HCT116 (cell line): ENCODE measurements at regions of chr18 and their contacts with region 1.

Region 1: DNA sequence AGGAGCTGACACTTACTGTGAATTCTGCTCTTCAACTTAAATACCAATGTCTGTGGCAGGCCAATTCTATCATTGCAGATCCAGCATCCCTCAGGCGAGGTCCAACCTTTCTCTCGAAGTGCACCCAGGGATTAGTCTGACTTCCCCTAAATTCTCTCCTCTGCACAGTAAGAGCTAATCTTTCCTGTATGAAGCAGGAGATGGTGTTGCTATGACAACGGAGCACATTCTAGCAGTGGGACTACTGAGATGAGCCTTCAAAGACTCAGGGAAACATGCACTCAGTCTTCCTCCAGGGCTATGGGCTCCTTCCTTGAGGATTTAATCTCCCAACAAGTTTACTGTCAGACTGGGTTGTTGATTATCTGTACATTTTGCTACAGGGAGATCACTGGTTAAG is 176.3 kb downstream of the NOL4 start:
- DNase-seq: no peak
- ATAC-seq: no peak
- H3K4me3 ChIP-seq: no peak overlapping the region
- H3K27ac ChIP-seq: no peak overlapping the region
- H3K4me1 ChIP-seq: no peaks in the 10 kb centered on the region
- H3K27me3 ChIP-seq: no peaks in the 10 kb centered on the region
- CTCF ChIP-seq: no peak
- POLR2A ChIP-seq: no peak
- RAD21 ChIP-seq: no peak

Region 2: GRCh38 chr18:33914399-33914798 is 134.0 kb before region 1 on chr18:
- CTCF ChIA-PET with region 1: no interaction called
- POLR2A ChIA-PET with region 1: no interaction called
- RAD21 ChIA-PET with region 1: no interaction called
- intact Hi-C with region 1: no loop called
- DNase-seq: no peak
- ATAC-seq: no peak
- H3K4me3 ChIP-seq: no peak overlapping the region
- H3K27ac ChIP-seq: no peak overlapping the region
- H3K4me1 ChIP-seq: no peaks in the 10 kb centered on the region
- H3K27me3 ChIP-seq: no peaks in the 10 kb centered on the region
- CTCF ChIP-seq: no peak
- POLR2A ChIP-seq: no peak
- RAD21 ChIP-seq: no peak

Region 3: GRCh38 chr18:33987206-33987605 is 61.2 kb before region 1 on chr18:
- CTCF ChIA-PET with region 1: no interaction called
- POLR2A ChIA-PET with region 1: no interaction called
- RAD21 ChIA-PET with region 1: no interaction called
- intact Hi-C with region 1: no loop called
- DNase-seq: no peak
- ATAC-seq: no peak
- H3K4me3 ChIP-seq: no peak overlapping the region
- H3K27ac ChIP-seq: no peak overlapping the region
- H3K4me1 ChIP-seq: 0 out of 4 replicates have a peak, but pooled peaks cover 0 to 2% of the 10 kb centered on the region in 2 experiments
- H3K27me3 ChIP-seq: no peaks in the 10 kb centered on the region
- CTCF ChIP-seq: no peak
- POLR2A ChIP-seq: no peak
- RAD21 ChIP-seq: no peak

Region 4: DNA sequence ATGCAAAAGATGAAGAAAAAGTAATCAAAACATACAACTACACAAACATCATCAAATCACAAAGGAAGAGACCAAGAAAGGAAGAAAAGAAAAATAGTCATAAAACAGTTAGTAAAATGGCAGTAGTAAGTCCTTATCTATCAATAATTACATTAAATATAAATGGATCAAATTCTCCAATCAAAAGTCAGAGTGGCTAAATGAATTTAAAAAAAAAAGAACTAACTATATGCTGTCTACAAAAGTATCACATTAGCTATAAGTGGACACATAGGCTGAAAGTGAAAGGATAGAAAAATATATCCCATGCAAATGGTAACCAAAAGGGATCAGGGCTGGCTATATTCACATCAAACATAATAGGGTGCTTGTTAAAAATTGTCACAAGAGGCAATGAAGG is 59.8 kb after region 1 on chr18:
- CTCF ChIA-PET with region 1: no interaction called
- POLR2A ChIA-PET with region 1: no interaction called
- RAD21 ChIA-PET with region 1: no interaction called
- intact Hi-C with region 1: loop called (anchors 10 kb)
- DNase-seq: no peak
- ATAC-seq: no peak
- H3K4me3 ChIP-seq: no peak overlapping the region
- H3K27ac ChIP-seq: no peak overlapping the region
- H3K4me1 ChIP-seq: no peaks in the 10 kb centered on the region
- H3K27me3 ChIP-seq: no peaks in the 10 kb centered on the region
- CTCF ChIP-seq: no peak
- POLR2A ChIP-seq: no peak
- RAD21 ChIP-seq: no peak

Region 5: DNA sequence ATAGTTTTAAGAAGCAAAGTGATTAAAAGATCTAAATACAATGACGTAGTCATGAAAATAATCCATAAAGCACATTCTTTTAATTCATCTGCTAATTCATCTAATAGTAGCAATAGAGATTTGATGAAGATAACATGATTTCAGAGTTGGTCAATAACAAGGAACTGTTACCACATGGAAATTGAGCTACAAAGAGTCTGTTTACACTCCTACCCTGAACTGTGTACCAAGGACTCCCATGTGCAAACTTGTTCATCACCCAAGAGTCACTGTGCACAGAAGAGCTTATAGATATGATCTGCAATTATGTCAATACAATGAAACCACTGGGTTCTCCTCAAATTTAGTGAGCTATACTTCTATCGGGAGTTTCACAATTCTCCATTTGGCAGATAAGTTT is 583.1 kb after region 1 on chr18:
- CTCF ChIA-PET with region 1: no interaction called
- POLR2A ChIA-PET with region 1: no interaction called
- RAD21 ChIA-PET with region 1: no interaction called
- intact Hi-C with region 1: no loop called
- DNase-seq: no peak
- ATAC-seq: no peak
- H3K4me3 ChIP-seq: no peak overlapping the region
- H3K27ac ChIP-seq: no peak overlapping the region
- H3K4me1 ChIP-seq: no peaks in the 10 kb centered on the region
- H3K27me3 ChIP-seq: no peaks in the 10 kb centered on the region
- CTCF ChIP-seq: no peak
- POLR2A ChIP-seq: no peak
- RAD21 ChIP-seq: no peak